ENCODE measurements at regions of chr9 and their contacts with region 1.

Region 1: GRCh38 chr9:33225319-33226149 is 14.4 kb upstream of the SPINK4 start:
- DNase-seq: peak; percentile 82
- H3K4me3 ChIP-seq: no peak overlapping the region
- H3K27ac ChIP-seq: no peak overlapping the region
- H3K4me1 ChIP-seq: peaks cover 10% of the 10 kb centered on the region
- H3K27me3 ChIP-seq: no peaks in the 10 kb centered on the region
- CTCF ChIP-seq: peak; percentile 79

Region 2: DNA sequence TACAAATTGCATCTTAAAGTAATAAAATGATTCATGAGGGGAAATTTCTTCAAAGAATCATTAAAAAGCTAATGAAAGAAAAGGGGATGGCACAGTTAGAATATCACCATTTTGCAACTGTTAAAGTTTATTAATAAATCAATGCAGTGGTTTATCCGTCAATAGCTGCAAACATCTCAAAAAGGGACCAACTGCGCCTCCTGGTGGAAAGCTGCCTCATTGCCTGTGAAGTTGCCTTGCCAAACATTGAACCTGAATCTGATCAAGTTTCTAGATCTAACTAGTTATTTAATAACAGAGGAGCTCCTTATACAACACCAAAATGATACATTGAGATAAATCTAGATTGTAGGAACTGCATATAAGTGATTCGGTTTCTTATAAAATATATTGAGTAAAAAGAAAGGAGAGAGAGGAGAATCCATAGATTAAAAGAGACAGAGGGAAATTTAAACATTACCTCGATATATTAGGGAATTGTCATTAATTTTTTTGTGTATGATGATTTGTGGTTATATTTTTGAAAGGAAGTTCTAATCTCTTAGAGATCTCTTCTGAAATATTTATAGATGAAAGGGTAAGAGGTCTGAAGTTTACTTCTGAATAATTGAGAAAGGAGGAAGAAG is 645.7 kb before region 1 on chr9:
- CTCF ChIA-PET with region 1: no interaction called
- POLR2A ChIA-PET with region 1: no interaction called
- intact Hi-C with region 1: loop called (anchors 10 kb)
- DNase-seq: peak; percentile 61
- H3K4me3 ChIP-seq: no peak overlapping the region
- H3K27ac ChIP-seq: no peak overlapping the region
- H3K4me1 ChIP-seq: no peaks in the 10 kb centered on the region
- H3K27me3 ChIP-seq: no peaks in the 10 kb centered on the region
- CTCF ChIP-seq: peak; percentile 92

Region 3: GRCh38 chr9:33167046-33167808 is 58.3 kb before region 1 on chr9 and contains the start of gene B4GALT1:
- CTCF ChIA-PET with region 1: interaction called, 4 read pairs
- POLR2A ChIA-PET with region 1: no interaction called
- intact Hi-C with region 1: loop called (anchors 5 kb)
- DNase-seq: peak; percentile 92
- H3K4me3 ChIP-seq: peak within 1 kb of the TSS; percentile 95
- H3K27ac ChIP-seq: peak within 1 kb of the TSS; percentile 91
- H3K4me1 ChIP-seq: peaks cover 46% of the 10 kb centered on the region
- H3K27me3 ChIP-seq: no peaks in the 10 kb centered on the region
- CTCF ChIP-seq: no peak
- total RNA-seq, gene B4GALT1: 31.0 and 32.0 TPM in 2 replicates

Region 4: DNA sequence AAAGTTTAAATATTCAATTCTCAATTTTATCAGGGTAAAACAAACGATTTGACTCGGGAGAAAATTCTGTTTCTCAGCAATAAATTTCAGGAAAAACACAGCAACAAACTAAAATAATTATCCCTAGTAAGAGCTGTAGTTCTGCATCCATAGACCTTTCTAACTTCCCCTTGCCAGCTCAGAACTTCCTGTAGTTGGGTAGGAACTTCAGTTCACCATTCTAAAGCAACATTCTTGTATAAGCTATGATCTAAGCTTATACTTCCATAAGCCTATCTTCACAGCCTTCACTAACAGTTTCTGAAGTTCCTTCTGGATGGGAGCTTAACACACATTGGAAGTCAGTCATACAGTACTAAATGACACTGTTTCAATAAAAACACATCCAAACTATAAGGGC is 726.5 kb after region 1 on chr9:
- CTCF ChIA-PET with region 1: no interaction called
- POLR2A ChIA-PET with region 1: no interaction called
- intact Hi-C with region 1: no loop called
- DNase-seq: no peak
- H3K4me3 ChIP-seq: no peak overlapping the region
- H3K27ac ChIP-seq: no peak overlapping the region
- H3K4me1 ChIP-seq: no peaks in the 10 kb centered on the region
- H3K27me3 ChIP-seq: no peaks in the 10 kb centered on the region
- CTCF ChIP-seq: no peak

Region 5: DNA sequence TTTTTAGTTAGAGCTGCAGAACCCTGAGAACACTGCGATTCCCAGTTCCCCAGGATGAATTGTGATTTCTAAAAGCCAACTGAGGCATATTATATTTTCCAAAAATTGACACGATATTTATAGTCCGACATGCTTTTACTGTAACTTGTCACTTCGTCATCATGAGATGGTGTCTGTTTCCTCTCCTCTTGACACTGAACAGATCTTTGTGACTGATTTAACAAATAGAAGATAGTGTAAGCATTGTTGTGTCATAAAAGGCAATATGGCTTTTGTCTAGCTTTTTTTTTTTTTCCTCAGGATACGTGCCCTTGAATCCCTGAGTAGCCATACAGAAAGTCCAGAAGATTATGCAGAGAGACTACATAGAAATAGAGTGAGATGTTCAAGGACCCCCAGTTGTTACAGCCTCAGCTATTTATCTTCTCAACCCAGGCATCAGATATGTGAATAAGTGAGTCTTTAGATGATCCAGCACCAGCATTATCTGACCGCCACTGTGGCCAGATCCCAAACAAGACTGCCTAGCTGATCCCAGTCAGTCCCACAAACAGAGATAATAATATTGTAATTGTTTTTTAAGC is 1512.2 kb after region 1 on chr9:
- CTCF ChIA-PET with region 1: no interaction called
- POLR2A ChIA-PET with region 1: no interaction called
- intact Hi-C with region 1: no loop called
- DNase-seq: no peak
- H3K4me3 ChIP-seq: no peak overlapping the region
- H3K27ac ChIP-seq: no peak overlapping the region
- H3K4me1 ChIP-seq: no peaks in the 10 kb centered on the region
- H3K27me3 ChIP-seq: peaks cover 3% of the 10 kb centered on the region
- CTCF ChIP-seq: no peak

Measured in A673 (cell line).